ENCODE measurements at regions of chrX and their contacts with region 1.

Region 1: GRCh38 chrX:148049441-148049840 is 68.3 kb downstream of the FMR1NB start:
- DNase-seq: peak; percentile 52
- ATAC-seq: no peak
- H3K4me3 ChIP-seq: no peak overlapping the region
- H3K4me3 Mint-ChIP-seq: no peak overlapping the region
- H3K27ac ChIP-seq: no peak overlapping the region
- H3K27ac Mint-ChIP-seq: no peak overlapping the region
- H3K4me1 ChIP-seq: no peaks in the 10 kb centered on the region
- H3K4me1 Mint-ChIP-seq: no peaks in the 10 kb centered on the region
- H3K27me3 ChIP-seq: no peaks in the 10 kb centered on the region
- H3K27me3 Mint-ChIP-seq: no peaks in the 10 kb centered on the region
- CTCF ChIP-seq: peak; percentile 74

Region 2: GRCh38 chrX:148146121-148146520 is 96.7 kb after region 1 on chrX:
- CTCF ChIA-PET with region 1: no interaction called
- POLR2A ChIA-PET with region 1: no interaction called
- intact Hi-C with region 1: no loop called
- DNase-seq: no peak
- ATAC-seq: no peak
- H3K4me3 ChIP-seq: no peak overlapping the region
- H3K4me3 Mint-ChIP-seq: no peak overlapping the region
- H3K27ac ChIP-seq: no peak overlapping the region
- H3K27ac Mint-ChIP-seq: no peak overlapping the region
- H3K4me1 ChIP-seq: no peaks in the 10 kb centered on the region
- H3K4me1 Mint-ChIP-seq: no peaks in the 10 kb centered on the region
- H3K27me3 ChIP-seq: no peaks in the 10 kb centered on the region
- H3K27me3 Mint-ChIP-seq: no peaks in the 10 kb centered on the region
- CTCF ChIP-seq: no peak

Region 3: DNA sequence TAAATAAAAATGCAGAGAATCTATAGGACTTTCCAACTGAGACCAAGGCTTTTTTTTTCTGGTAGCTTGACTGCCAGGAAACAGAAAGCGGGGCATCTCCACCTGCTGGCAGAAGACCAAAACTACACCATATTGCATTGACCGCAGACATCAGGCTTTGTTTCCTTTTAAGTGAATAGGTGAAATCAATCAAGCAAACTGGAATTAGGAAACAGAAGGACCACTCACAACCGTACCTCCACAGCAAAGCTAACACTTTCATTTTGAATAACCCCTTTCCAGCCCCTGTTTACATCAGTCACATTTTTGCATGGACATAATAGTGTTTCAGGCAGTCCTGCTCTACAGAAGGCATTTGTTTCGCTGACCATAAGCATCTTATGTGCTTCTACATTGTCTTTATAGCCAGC is 1237.5 kb after region 1 on chrX:
- CTCF ChIA-PET with region 1: interaction called, 35 read pairs
- POLR2A ChIA-PET with region 1: no interaction called
- intact Hi-C with region 1: no loop called
- DNase-seq: peak; percentile 56
- ATAC-seq: no peak
- H3K4me3 ChIP-seq: no peak overlapping the region
- H3K4me3 Mint-ChIP-seq: no peak overlapping the region
- H3K27ac ChIP-seq: no peak overlapping the region
- H3K27ac Mint-ChIP-seq: no peak overlapping the region
- H3K4me1 ChIP-seq: no peaks in the 10 kb centered on the region
- H3K4me1 Mint-ChIP-seq: no peaks in the 10 kb centered on the region
- H3K27me3 ChIP-seq: no peaks in the 10 kb centered on the region
- H3K27me3 Mint-ChIP-seq: no peaks in the 10 kb centered on the region
- CTCF ChIP-seq: peak; percentile 60

Region 4: GRCh38 chrX:149470955-149471354 is 1421.5 kb after region 1 on chrX:
- CTCF ChIA-PET with region 1: interaction called, 42 read pairs
- POLR2A ChIA-PET with region 1: no interaction called
- intact Hi-C with region 1: no loop called
- DNase-seq: peak; percentile 63
- ATAC-seq: peak; percentile 76
- H3K4me3 ChIP-seq: no peak overlapping the region
- H3K4me3 Mint-ChIP-seq: no peak overlapping the region
- H3K27ac ChIP-seq: no peak overlapping the region
- H3K27ac Mint-ChIP-seq: no peak overlapping the region
- H3K4me1 ChIP-seq: no peaks in the 10 kb centered on the region
- H3K4me1 Mint-ChIP-seq: no peaks in the 10 kb centered on the region
- H3K27me3 ChIP-seq: no peaks in the 10 kb centered on the region
- H3K27me3 Mint-ChIP-seq: no peaks in the 10 kb centered on the region
- CTCF ChIP-seq: peak; percentile 77